Posterior cingulate gyrus (tissue), 11 donors: ENCODE measurements at regions of chr1 and their contacts with region 1.

Region 1: GRCh38 chr1:77031106-77031662 is 163.9 kb downstream of the ST6GALNAC5 start:
- DNase-seq: no peak

Region 2: DNA sequence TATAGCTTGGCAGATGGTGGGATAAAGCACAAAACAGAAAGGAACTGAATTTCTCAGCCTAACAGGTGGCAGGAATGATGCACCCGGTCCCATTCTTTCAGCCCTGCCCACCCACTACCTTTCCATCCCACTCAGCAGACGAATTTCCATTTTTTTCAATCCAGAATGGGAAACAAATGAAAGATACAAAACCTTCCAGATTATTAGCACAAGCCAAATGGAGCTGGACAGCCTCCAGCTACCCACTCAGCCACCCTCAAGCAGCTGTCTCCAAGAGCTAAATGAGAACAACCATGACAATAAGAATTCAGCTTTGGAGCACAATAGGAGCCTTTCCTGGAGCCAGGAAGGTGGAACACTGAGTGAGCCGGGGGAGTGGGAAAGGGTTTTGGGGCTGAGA is 260.2 kb before region 1 on chr1:
- intact Hi-C with region 1: loop called (anchors 10 kb)
- DNase-seq: peak in 9 of 10 donors; percentile 11 to 86 (median 54)

Region 3: DNA sequence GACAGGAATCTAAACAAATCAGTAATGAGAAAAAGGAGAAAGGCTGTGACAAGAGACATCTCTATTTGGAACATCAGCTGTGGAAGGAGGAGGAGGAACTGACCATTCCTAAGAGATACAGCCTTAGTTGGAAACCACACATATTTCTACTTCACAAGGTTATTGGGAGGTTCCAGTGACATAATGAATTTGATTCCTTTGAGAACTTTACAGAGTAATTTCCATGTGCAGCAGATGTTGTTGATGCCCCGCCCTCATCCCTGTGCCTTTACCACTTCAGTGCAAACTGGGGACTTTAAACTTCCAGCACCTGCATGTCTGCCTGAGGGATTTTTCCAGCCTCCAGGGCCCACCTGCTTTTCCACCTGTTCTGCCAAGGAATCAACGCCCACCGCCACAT is 173.2 kb before region 1 on chr1:
- intact Hi-C with region 1: no loop called
- DNase-seq: no peak

Region 4: GRCh38 chr1:77126307-77126706 is 95.1 kb after region 1 on chr1:
- intact Hi-C with region 1: no loop called
- DNase-seq: peak in 2 of 10 donors; percentile 10